Psoas muscle (tissue), 8 donors: ENCODE measurements at regions of chr2 and their contacts with region 1.

Region 1: DNA sequence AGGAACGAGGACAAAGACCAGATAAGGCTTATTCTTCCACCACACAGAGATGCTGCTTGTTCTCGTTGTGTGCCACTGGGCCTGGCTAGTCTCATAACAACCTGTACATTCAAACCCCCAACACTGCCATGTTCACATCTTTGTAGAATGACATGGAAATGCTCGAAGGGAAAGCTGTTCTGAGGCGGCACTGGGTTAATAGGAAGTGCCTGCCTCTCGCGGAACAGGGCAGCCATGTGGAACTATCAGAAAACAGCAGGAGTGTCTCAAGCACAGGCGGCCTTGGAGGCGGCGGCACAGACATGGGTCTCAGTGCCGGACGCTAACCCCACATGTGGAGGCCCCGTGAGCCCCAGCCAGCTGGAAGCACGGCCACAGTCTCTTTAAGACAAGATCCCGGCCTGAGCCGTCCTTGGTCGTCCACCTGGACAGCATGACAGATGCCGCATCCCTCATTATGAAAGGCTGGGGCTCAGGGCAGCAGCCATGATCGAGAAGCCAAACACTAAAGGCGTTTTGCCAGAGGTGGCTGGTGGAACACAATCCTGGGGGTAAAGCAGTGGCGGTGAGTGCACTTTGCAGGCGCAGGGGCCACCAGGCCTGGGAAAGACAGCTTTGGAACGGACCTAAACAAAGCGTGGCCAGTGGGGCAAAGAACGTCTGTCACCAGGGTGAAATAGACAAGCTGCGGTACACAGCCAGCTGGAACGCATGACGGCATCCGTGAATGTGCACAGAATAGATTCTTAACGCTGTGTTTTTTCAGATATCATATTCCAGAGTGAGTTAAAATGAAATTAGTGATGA is 161.0 kb downstream of the HDAC4 start:
- DNase-seq: no peak
- ATAC-seq: peak; percentile 43 to 58 (median 58)
- H3K4me3 ChIP-seq: peak overlapping the region; percentile 23
- H3K27ac ChIP-seq: peak overlapping the region; percentile 83
- H3K4me1 ChIP-seq: peaks cover 87% of the 10 kb centered on the region
- H3K27me3 ChIP-seq: no peaks in the 10 kb centered on the region
- CTCF ChIP-seq: no peak

Region 2: DNA sequence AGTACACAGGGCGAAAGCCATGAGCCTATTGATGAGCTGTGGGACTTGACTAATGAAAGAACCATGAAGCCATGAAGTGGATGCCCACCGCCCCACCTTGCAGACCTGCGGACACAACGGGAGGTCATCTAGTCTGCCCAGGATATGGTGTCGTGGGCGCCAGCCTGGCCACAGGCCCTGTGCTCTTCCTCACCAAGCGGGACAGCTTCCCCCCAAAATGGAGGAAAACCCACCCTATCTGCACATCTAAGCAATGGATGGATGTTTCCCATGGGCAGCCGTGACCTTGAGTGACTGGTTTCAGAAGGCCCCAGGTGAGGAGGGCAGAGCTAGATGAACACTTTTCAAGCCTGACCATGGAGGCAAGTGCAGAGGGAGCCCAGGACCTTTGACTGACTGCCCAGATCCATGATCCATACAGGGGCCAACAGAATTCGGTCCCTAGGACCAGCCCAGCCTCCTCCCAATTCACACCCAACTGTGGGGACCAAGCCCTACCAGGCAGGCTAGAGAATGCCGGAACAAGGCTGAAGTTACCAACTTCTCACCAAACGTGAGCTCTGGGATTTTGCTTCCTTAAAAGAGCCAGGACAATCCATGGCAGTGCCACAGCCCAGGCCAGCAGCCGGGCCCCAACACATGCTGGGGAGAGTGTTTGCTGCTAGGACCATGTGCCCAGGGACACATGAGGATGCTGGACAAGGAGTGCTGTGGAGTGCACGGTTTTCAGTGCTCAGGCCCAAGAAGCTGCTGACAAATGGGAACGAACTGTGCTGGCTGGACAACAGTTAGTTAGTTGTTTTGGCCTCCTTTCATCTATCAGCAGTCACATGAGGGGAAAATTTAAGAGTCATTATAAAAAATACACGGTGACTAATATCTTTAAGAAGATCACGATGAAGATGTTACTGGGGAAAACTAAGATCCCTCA is 88.3 kb before region 1 on chr2:
- intact Hi-C with region 1: loop called in 1 of 2 experiments (anchors 5 kb)
- DNase-seq: peak; percentile 45 to 84
- ATAC-seq: peak; percentile 22 to 89 (median 76)
- H3K4me3 ChIP-seq: no peak overlapping the region
- H3K27ac ChIP-seq: peak overlapping the region; percentile 64
- H3K4me1 ChIP-seq: peaks cover 23% of the 10 kb centered on the region
- H3K27me3 ChIP-seq: no peaks in the 10 kb centered on the region
- CTCF ChIP-seq: no peak

Region 3: DNA sequence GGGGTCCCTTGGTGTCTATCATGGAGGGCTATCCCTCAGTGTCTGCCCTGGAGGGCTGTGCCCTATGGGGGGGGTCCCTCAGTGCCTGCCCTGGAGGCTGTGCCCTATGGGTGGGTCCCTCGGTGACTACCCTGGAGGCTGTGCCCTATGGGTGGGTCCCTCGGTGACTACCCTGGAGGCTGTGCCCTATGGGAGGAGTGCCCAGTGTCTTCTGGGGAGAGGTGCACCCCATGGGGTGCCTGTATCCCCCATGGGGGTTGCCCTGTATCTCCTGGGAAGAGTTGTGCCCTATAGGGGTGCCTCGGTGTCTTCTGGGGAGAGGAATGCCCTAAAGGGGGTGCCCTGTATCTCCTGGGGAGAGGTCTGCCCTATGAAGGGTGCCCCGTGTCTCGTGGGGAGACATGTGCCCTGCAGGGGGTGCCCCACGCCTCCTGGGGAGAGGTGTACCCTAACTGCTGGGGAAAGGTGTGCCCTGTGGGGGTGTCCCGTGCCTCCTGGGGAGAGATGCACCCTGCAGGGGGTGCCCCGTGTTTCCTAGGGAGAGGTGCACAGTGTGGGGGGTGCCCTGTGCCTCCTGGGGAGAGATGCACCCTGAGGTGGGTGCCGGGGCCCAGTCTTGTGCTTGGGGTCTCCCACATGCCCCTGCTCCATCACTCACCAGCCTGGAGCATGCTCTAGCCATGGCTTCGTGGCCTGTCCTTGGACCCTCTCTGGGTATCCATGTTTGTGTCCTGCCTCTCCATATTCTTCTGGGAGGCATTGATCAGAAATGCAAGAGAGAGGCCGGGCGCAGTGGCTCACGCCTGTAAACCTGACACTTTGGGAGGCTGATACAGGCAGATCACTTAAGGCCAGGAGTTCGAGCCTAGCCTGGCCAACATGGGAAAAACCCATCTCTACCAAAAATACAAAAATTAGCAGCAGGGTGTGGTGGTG is 54.6 kb before region 1 on chr2:
- intact Hi-C with region 1: no loop called
- DNase-seq: no peak
- ATAC-seq: peak in 1 of 4 donors; percentile 13
- H3K4me3 ChIP-seq: no peak overlapping the region
- H3K27ac ChIP-seq: no peak overlapping the region
- H3K4me1 ChIP-seq: no peaks in the 10 kb centered on the region
- H3K27me3 ChIP-seq: no peaks in the 10 kb centered on the region
- CTCF ChIP-seq: no peak